Heart left ventricle (tissue), 16 donors: ENCODE measurements at regions of chr10 and their contacts with region 1.

Region 1: DNA sequence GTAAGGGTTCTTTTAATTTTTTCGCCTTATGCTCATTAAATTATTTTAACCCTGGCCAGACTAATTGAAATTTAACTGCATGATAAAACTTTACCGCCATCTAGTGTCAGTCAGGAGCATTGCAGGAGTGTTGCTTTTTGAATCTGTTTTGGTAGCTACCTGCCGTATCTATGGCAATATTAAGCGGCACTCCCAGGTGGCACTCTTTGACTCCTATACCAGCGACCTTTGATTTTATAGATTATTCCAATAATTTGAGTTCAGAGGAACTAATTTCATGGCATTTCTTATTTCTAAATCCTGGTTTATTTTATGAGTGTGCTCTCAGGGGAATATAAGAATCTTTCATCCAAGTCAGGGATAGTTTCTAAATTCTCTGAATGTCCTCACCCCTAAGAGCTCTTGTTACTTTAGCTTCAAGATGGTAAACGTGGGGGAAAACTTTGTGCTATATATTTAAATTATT is 198.9 kb downstream of the REEP3 start:
- DNase-seq: peak in 1 of 5 donors; percentile 28
- ATAC-seq: peak in 1 of 4 donors; percentile 49
- H3K4me3 ChIP-seq: no peak overlapping the region
- H3K27ac ChIP-seq: peak overlapping the region in 5 of 12 donors; percentile 22 to 74 (median 31)
- H3K4me1 ChIP-seq: peaks cover 0 to 32% (median 13%) of the 10 kb centered on the region in 12 donors
- H3K27me3 ChIP-seq: no peaks in the 10 kb centered on the region
- CTCF ChIP-seq: peak; percentile 93 to 99 (median 98)
- POLR2A ChIP-seq: no peak

Region 2: DNA sequence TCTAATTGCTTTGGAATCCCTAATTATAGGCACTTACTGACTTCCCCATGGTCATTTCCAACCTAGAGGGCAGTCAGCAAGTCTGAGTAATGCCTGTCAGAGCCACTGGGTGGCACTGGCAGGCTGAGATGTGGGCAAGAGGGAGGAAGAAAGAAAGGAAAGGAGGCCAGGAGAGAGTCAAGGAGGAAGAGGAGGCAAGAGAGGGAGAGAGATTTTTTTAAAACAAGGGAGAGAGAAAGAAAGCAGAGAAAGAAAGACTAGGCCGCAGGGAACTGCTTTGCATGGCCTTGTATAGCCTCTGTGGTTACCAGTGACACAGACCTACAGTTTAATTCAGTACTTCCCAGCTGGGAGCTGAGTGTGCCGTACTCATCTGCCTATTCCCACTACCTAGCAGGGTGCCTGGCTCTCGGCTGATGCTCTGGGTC is 1126.0 kb before region 1 on chr10:
- intact Hi-C with region 1: loop called in 1 of 10 experiments (anchors 10 kb)
- DNase-seq: peak; percentile 51 to 79 (median 58)
- ATAC-seq: peak in 3 of 4 donors; percentile 83 to 94 (median 86)
- H3K4me3 ChIP-seq: no peak overlapping the region
- H3K27ac ChIP-seq: no peak overlapping the region
- H3K4me1 ChIP-seq: peaks cover 0 to 5% (median 0%) of the 10 kb centered on the region in 12 donors
- H3K27me3 ChIP-seq: no peaks in the 10 kb centered on the region
- CTCF ChIP-seq: peak; percentile 71 to 91 (median 86)
- POLR2A ChIP-seq: no peak

Region 3: GRCh38 chr10:63173468-63174232 is 546.5 kb before region 1 on chr10:
- intact Hi-C with region 1: loop called in 5 of 10 experiments (anchors 2 to 5 kb)
- DNase-seq: no peak
- ATAC-seq: peak in 2 of 4 donors; percentile 44 to 45
- H3K4me3 ChIP-seq: no peak overlapping the region
- H3K27ac ChIP-seq: peak overlapping the region in 1 of 12 donors; percentile 73
- H3K4me1 ChIP-seq: peaks cover 0 to 60% (median 9%) of the 10 kb centered on the region in 12 donors
- H3K27me3 ChIP-seq: no peaks in the 10 kb centered on the region
- CTCF ChIP-seq: no peak
- POLR2A ChIP-seq: no peak

Region 4: GRCh38 chr10:63217120-63217605 is 502.9 kb before region 1 on chr10:
- intact Hi-C with region 1: loop called in 8 of 10 experiments (anchors 2 to 10 kb)
- DNase-seq: no peak
- ATAC-seq: peak in 3 of 4 donors; percentile 75 to 84 (median 79)
- H3K4me3 ChIP-seq: no peak overlapping the region
- H3K27ac ChIP-seq: peak overlapping the region in 3 of 12 donors; percentile 7 to 24 (median 8)
- H3K4me1 ChIP-seq: peaks cover 0 to 63% (median 25%) of the 10 kb centered on the region in 12 donors
- H3K27me3 ChIP-seq: no peaks in the 10 kb centered on the region
- CTCF ChIP-seq: peak; percentile 55 to 80 (median 74)
- POLR2A ChIP-seq: no peak

Region 5: DNA sequence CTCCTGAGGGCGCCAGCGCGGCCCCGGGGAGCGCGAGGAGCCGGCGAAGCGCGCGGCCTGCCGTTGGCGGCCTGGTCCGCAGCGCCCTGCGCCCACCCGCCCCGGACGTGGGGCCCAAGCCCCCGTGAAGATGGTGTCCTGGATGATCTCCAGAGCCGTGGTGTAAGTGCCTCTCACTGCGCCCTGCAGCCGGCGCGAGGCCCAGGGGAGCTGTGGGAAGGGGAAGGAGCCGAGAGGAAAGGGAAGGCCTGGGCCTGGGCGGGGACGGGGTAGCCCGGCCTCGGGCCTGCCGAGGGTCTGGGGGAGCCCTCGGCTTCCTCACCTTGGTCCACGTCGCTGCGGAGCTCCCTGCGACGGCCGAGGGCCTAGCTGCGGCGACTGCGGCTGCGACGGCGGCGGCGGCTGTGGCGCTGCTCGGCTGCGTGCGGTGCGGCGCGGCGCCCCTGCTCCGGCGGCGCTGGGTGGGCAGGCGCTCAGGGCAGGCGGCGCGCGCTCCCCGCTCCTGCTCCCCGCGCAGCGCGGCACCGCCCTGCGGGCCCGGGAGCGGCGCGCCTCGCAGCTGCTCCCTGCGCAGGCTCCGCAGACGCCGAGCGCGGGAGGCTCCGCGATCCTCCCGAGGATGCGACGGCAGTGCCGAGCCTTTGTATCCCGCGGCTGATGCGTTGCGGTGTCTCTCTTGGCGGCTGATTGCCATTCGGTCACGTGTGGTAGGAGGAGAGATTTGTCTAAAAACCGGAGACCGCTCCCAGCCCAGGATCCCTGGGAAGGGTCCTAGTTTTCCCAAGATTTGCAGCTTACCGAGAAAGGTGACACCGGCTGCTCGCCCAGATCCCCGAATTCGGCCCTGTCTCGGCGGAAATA is 198.5 kb before region 1 on chr10:
- intact Hi-C with region 1: loop called in 5 of 10 experiments (anchors 5 to 10 kb)
- DNase-seq: peak; percentile 69 to 88 (median 76)
- ATAC-seq: peak; percentile 15 to 91 (median 82)
- H3K4me3 ChIP-seq: peak overlapping the region; percentile 63 to 91 (median 78)
- H3K27ac ChIP-seq: peak overlapping the region; percentile 97 to 99 (median 98)
- H3K4me1 ChIP-seq: peaks cover 4 to 64% (median 49%) of the 10 kb centered on the region in 12 donors
- H3K27me3 ChIP-seq: no peaks in the 10 kb centered on the region
- CTCF ChIP-seq: no peak
- POLR2A ChIP-seq: peak in 1 of 2 donors; percentile 35

Region 6: GRCh38 chr10:63666836-63667383 is 53.2 kb before region 1 on chr10:
- intact Hi-C with region 1: no loop called
- DNase-seq: no peak
- ATAC-seq: no peak
- H3K4me3 ChIP-seq: no peak overlapping the region
- H3K27ac ChIP-seq: peak overlapping the region in 11 of 12 donors; percentile 9 to 59 (median 40)
- H3K4me1 ChIP-seq: peaks cover 3 to 44% (median 24%) of the 10 kb centered on the region in 12 donors
- H3K27me3 ChIP-seq: no peaks in the 10 kb centered on the region
- CTCF ChIP-seq: no peak
- POLR2A ChIP-seq: no peak

Region 7: GRCh38 chr10:63767138-63767801 is 47.2 kb after region 1 on chr10:
- intact Hi-C with region 1: loop called in 1 of 10 experiments (anchors 5 kb)
- DNase-seq: no peak
- ATAC-seq: peak; percentile 22 to 50 (median 42)
- H3K4me3 ChIP-seq: no peak overlapping the region
- H3K27ac ChIP-seq: peak overlapping the region in 10 of 12 donors; percentile 2 to 55 (median 30)
- H3K4me1 ChIP-seq: peaks cover 0 to 17% (median 4%) of the 10 kb centered on the region in 12 donors
- H3K27me3 ChIP-seq: no peaks in the 10 kb centered on the region
- CTCF ChIP-seq: peak; percentile 17 to 60 (median 44)
- POLR2A ChIP-seq: no peak